HepG2 (cell line): ENCODE measurements at regions of chr1 and their contacts with region 1.

Region 1: DNA sequence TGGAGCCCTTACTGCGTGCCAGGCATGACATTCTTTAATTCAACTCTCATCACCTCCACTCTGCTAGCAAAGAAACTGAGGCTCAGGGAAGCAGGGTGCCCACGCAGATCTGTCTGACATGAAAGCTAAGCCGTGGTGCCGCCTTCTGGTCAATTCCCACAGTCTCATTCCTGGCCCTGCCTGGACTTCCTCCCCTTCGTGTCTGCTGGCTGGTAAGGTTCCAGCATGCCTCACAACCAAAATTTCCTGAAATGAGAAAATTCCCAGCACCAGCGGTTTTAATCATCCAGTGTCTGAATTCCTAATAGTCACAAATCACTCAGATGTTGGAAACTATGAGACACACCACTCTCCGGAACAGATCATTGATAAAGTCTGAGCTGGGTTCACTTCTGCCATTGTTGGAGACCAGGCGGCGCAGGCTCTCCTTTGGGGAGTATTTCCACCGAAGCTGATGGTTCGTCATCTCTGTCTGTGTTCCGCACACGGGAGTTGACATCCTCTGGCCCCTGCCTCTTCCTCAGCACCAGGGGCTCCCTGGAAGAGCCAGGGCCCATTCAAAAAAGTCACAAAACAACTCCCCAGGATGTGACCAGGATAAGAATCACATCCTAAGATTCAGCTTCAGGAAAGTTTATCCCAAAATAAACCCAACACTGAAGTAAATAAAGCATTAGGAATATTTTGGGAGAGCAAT is 167.7 kb downstream of the PLPP3 start:
- DNase-seq: no peak
- ATAC-seq: no peak
- H3K4me3 ChIP-seq: no peak overlapping the region
- H3K27ac ChIP-seq: peak overlapping the region; percentile 34
- H3K4me1 ChIP-seq: peaks cover 73% of the 10 kb centered on the region
- H3K27me3 ChIP-seq: no peaks in the 10 kb centered on the region
- CTCF ChIP-seq: peak; percentile 28
- EP300 ChIP-seq: no peak
- POLR2A ChIP-seq: no peak
- RAD21 ChIP-seq: no peak

Region 2: GRCh38 chr1:56189946-56190792 is 221.5 kb before region 1 on chr1:
- CTCF ChIA-PET with region 1: no interaction called
- POLR2A ChIA-PET with region 1: interaction called, 7 read pairs
- in situ Hi-C with region 1: no loop called
- intact Hi-C with region 1: loop called (anchors 1 kb)
- DNase-seq: peak; percentile 99
- ATAC-seq: peak; percentile 94
- H3K4me3 ChIP-seq: peak overlapping the region; percentile 52 to 65 (median 58); a peak in 5 of 6 replicates
- H3K27ac ChIP-seq: peak overlapping the region; percentile 91
- H3K4me1 ChIP-seq: peaks cover 47% of the 10 kb centered on the region
- H3K27me3 ChIP-seq: no peaks in the 10 kb centered on the region
- CTCF ChIP-seq: peak; percentile 86
- EP300 ChIP-seq: peak; percentile 98 to 99
- POLR2A ChIP-seq: peak in 1 of 2 experiments; percentile 94; a peak in 2 of 4 replicates
- RAD21 ChIP-seq: peak; percentile 71

Region 3: GRCh38 chr1:56330391-56331026 is 81.1 kb before region 1 on chr1:
- CTCF ChIA-PET with region 1: no interaction called
- POLR2A ChIA-PET with region 1: interaction called, 5 read pairs
- in situ Hi-C with region 1: no loop called
- intact Hi-C with region 1: loop called (anchors 1 kb)
- DNase-seq: peak; percentile 47
- ATAC-seq: no peak; the same call in 2 of the 3 replicates
- H3K4me3 ChIP-seq: peak overlapping the region in 1 of 3 experiments; percentile 47; a peak in 1 of 6 replicates
- H3K27ac ChIP-seq: peak overlapping the region; percentile 85
- H3K4me1 ChIP-seq: peaks cover 39% of the 10 kb centered on the region
- H3K27me3 ChIP-seq: no peaks in the 10 kb centered on the region
- CTCF ChIP-seq: no peak
- EP300 ChIP-seq: no peak
- POLR2A ChIP-seq: no peak
- RAD21 ChIP-seq: no peak

Region 4: GRCh38 chr1:56435434-56436262 is 24.0 kb after region 1 on chr1:
- CTCF ChIA-PET with region 1: no interaction called
- POLR2A ChIA-PET with region 1: interaction called, 20 read pairs
- in situ Hi-C with region 1: no loop called
- intact Hi-C with region 1: no loop called
- DNase-seq: peak; percentile 52
- ATAC-seq: peak; percentile 24
- H3K4me3 ChIP-seq: no peak overlapping the region
- H3K27ac ChIP-seq: peak overlapping the region; percentile 81
- H3K4me1 ChIP-seq: peaks cover 97% of the 10 kb centered on the region
- H3K27me3 ChIP-seq: no peaks in the 10 kb centered on the region
- CTCF ChIP-seq: no peak
- EP300 ChIP-seq: no peak
- POLR2A ChIP-seq: no peak
- RAD21 ChIP-seq: no peak

Region 5: DNA sequence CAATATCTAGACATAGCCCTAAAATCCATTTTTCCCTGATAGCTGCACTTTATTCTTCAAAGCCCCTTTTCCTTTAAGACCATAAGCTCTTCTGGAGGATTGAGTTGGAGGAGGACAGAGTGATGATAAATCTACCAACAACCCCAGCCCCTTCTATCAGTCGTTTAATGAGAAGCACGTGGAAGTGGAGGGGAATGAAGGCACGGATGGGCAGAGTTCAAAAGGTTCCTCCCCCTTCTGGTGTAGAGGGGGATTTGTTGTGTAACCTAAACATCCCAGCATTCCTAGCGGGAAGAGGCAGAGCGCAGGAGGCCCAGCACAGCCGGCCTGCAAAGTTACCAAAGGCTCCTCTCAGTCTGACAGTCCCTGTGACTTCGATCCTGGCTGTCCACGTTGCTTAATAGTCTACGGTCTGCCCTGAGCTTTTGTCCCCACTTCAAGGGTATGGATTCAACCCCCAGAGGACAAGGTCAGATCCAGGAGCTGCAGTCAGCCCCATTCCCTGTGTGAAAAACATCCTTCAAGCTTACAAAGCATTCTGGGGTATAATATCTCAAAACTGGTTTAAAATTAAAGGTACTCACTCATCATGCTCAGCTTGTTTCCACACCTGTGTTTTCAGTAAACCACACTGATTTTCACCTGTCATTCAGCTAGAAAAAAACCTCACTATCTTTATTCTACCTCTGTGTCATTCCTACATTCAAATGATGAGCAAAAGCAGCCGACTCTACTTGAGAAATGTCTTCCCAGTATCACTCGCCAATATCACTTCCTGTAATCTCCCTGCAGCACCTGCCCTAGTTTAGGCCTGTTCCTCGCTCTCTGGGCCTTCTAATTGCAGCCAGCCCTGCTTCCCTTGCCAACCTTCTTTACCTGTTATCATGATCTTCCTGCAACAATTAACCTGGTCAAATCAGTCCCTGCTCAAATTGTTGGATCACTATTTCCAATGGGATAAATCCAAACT is 49.8 kb after region 1 on chr1:
- CTCF ChIA-PET with region 1: no interaction called
- POLR2A ChIA-PET with region 1: interaction called, 10 read pairs
- in situ Hi-C with region 1: no loop called
- intact Hi-C with region 1: no loop called
- DNase-seq: peak; percentile 95
- ATAC-seq: peak; percentile 99
- H3K4me3 ChIP-seq: peak overlapping the region in 1 of 3 experiments; percentile 3; a peak in 1 of 6 replicates
- H3K27ac ChIP-seq: peak overlapping the region; percentile 80
- H3K4me1 ChIP-seq: peaks cover 47% of the 10 kb centered on the region
- H3K27me3 ChIP-seq: no peaks in the 10 kb centered on the region
- CTCF ChIP-seq: peak; percentile 59
- EP300 ChIP-seq: peak; percentile 60 to 94; a peak in 3 of 4 replicates
- POLR2A ChIP-seq: peak in 1 of 2 experiments; percentile 62; a peak in 2 of 4 replicates
- RAD21 ChIP-seq: peak; percentile 57

Region 6: GRCh38 chr1:56496821-56497772 is 85.5 kb after region 1 on chr1:
- CTCF ChIA-PET with region 1: no interaction called
- POLR2A ChIA-PET with region 1: interaction called, 10 read pairs
- in situ Hi-C with region 1: no loop called
- intact Hi-C with region 1: no loop called
- DNase-seq: no peak
- ATAC-seq: no peak
- H3K4me3 ChIP-seq: no peak overlapping the region
- H3K27ac ChIP-seq: peak overlapping the region; percentile 90
- H3K4me1 ChIP-seq: peaks cover 95% of the 10 kb centered on the region
- H3K27me3 ChIP-seq: no peaks in the 10 kb centered on the region
- CTCF ChIP-seq: no peak
- EP300 ChIP-seq: no peak
- POLR2A ChIP-seq: no peak
- RAD21 ChIP-seq: no peak

Region 7: GRCh38 chr1:56570924-56571372 is 159.3 kb after region 1 on chr1:
- CTCF ChIA-PET with region 1: no interaction called
- POLR2A ChIA-PET with region 1: interaction called, 10 read pairs
- in situ Hi-C with region 1: loop called (anchors 5 kb)
- intact Hi-C with region 1: no loop called
- DNase-seq: no peak
- ATAC-seq: no peak
- H3K4me3 ChIP-seq: no peak overlapping the region
- H3K27ac ChIP-seq: peak overlapping the region; percentile 15
- H3K4me1 ChIP-seq: peaks cover 98% of the 10 kb centered on the region
- H3K27me3 ChIP-seq: no peaks in the 10 kb centered on the region
- CTCF ChIP-seq: no peak
- EP300 ChIP-seq: no peak
- POLR2A ChIP-seq: no peak
- RAD21 ChIP-seq: no peak